Calu3 (cell line): ENCODE measurements at regions of chr18 and their contacts with region 1.

Region 1: GRCh38 chr18:12744103-12744502 is 41.3 kb downstream of the PSMG2 start:
- DNase-seq: no peak
- H3K4me3 Mint-ChIP-seq: no peak overlapping the region
- H3K27ac Mint-ChIP-seq: no peak overlapping the region
- H3K4me1 Mint-ChIP-seq: peaks cover 9% of the 10 kb centered on the region
- H3K27me3 Mint-ChIP-seq: peaks cover 4% of the 10 kb centered on the region
- CTCF ChIP-seq: no peak

Region 2: GRCh38 chr18:12890506-12890905 is 146.4 kb after region 1 on chr18:
- CTCF ChIA-PET with region 1: interaction called, 6 read pairs
- intact Hi-C with region 1: loop called (anchors 1 kb)
- DNase-seq: peak; percentile 22
- H3K4me3 Mint-ChIP-seq: no peak overlapping the region
- H3K27ac Mint-ChIP-seq: peak overlapping the region; percentile 31
- H3K4me1 Mint-ChIP-seq: peaks cover 31% of the 10 kb centered on the region
- H3K27me3 Mint-ChIP-seq: no peaks in the 10 kb centered on the region
- CTCF ChIP-seq: peak; percentile 35

Region 3: GRCh38 chr18:12911025-12911928 is 167.2 kb after region 1 on chr18:
- CTCF ChIA-PET with region 1: no interaction called
- intact Hi-C with region 1: no loop called
- DNase-seq: no peak
- H3K4me3 Mint-ChIP-seq: no peak overlapping the region
- H3K27ac Mint-ChIP-seq: no peak overlapping the region
- H3K4me1 Mint-ChIP-seq: no peaks in the 10 kb centered on the region
- H3K27me3 Mint-ChIP-seq: peaks cover 15% of the 10 kb centered on the region
- CTCF ChIP-seq: no peak

Region 4: GRCh38 chr18:12934454-12935071 is 190.5 kb after region 1 on chr18:
- CTCF ChIA-PET with region 1: interaction called, 26 read pairs
- intact Hi-C with region 1: loop called (anchors 1 kb)
- DNase-seq: peak; percentile 79
- H3K4me3 Mint-ChIP-seq: no peak overlapping the region
- H3K27ac Mint-ChIP-seq: no peak overlapping the region
- H3K4me1 Mint-ChIP-seq: peaks cover 9% of the 10 kb centered on the region
- H3K27me3 Mint-ChIP-seq: peaks cover 16% of the 10 kb centered on the region
- CTCF ChIP-seq: peak; percentile 92